ENCODE measurements at regions of chr10 and their contacts with region 1.

Region 1: DNA sequence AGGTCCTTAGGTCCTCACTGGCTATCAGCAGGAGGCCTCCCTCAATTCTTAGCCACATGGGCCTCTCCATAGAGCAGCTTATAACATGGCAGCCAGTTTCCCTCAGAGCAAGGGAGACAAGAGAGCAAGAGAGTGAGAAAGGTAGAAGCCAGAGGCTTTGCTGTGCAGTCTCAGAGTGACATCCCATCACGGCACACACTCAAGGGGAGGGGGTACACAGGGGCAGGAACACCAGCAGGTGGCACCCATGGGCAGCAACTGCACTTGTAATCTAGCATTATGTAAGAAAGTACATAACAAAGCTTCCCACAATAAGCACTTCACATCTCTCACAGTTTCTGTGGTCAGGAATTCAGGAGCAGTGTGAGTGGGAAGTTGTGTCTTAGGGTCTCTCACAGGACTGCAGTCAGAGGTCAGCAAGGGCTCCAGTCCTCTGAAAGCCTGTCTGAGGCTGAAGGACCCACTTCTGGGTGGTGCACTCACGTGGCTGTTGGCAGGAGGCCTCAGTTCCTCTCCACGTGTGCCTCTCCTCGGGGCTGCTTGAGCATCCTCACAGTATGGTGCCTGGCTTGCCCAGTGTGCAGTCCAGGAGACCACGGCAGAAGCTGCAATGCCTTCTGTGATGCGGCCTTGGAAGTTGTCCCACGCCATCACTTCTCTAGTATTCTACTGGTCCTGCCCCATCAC is 159.4 kb downstream of the OAT start:
- DNase-seq: no peak
- H3K4me3 ChIP-seq: no peak overlapping the region
- H3K27ac ChIP-seq: no peak overlapping the region
- H3K4me1 ChIP-seq: no peaks in the 10 kb centered on the region
- H3K27me3 ChIP-seq: no peaks in the 10 kb centered on the region
- CTCF ChIP-seq: no peak
- EP300 ChIP-seq: no peak
- POLR2A ChIP-seq: no peak

Region 2: DNA sequence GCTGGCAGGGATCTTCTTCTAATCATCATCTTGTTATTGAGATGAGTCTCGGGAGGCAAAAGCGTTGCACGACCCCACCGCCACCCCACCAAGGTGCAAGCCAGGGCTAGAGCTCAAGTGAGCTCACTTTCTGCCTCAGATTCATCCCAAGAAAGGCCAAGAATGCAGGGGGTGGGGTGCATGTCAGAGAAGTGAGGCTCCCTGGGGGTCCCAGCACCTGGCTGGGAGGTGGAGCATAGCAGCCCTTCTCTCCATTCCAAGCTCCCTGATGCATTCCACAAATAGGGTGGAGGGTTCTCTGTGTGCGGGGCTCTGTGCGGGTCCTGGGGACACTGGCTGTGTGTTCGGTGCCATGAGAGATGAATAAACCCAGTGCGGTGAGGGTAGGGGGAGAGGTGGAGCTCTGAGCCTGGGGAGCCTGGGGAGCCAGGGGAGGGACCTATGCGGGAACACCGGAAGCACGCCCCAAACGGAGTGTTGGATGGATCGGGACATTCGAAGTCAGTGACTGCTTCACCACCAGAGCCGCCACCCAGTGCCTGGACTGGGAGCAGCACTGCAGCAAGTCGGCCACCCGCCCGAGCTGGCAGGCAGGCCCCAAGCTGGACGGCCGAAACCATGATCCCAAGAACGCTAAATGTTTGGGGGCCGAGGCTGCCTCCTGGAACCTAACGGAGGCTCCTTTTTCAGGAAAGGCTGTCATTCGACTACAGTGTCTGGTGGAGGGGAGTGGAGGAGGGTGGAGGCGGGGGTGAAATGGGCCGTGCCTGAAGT is 1141.5 kb before region 1 on chr10:
- in situ Hi-C with region 1: no loop called
- intact Hi-C with region 1: loop called (anchors 5 kb)
- DNase-seq: no peak
- H3K4me3 ChIP-seq: no peak overlapping the region
- H3K27ac ChIP-seq: no peak overlapping the region
- H3K4me1 ChIP-seq: no peaks in the 10 kb centered on the region
- H3K27me3 ChIP-seq: peaks cover 44% of the 10 kb centered on the region
- CTCF ChIP-seq: no peak
- EP300 ChIP-seq: no peak
- POLR2A ChIP-seq: no peak

Region 3: DNA sequence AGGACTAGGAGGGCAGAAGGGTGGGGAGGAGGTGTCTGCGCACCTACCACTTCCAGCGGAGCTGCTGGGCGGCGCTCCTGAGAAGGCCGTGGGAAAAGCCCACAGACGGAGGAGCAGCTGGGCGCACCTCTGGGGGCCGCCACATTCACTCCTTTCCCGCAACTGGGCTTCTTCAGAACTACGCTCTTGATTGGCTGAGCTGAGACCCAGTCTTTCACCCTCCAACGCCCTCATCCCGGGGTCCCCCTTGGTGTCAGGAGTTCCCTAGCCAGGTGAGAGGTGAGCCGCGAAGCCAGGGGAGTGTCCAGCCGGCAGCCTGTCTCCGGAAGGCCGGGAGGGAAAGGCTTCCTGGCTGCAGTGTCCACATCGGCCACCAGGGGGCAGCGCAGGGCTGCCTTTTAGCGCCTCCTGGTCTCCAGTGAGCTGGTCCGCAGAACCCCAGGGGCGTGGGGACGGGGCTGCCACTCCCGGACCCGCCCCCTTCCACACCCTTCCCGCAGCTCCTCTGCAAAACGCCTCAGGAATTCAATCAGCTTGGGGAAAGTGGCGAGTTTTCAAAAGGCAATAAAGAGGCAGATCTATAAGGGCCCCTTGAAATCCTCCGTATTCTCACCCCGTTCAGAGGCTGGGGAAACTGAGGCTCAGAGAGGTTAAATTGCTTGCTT is 264.7 kb before region 1 on chr10:
- in situ Hi-C with region 1: loop called in 2 of 4 experiments (anchors 25 kb)
- intact Hi-C with region 1: loop called (anchors 10 kb)
- DNase-seq: peak; percentile 90
- H3K4me3 ChIP-seq: peak overlapping the region in 2 of 4 donors; percentile 3 to 5
- H3K27ac ChIP-seq: peak overlapping the region in 2 of 4 donors; percentile 41 to 64
- H3K4me1 ChIP-seq: peaks cover 15 to 27% (median 18%) of the 10 kb centered on the region in 4 donors
- H3K27me3 ChIP-seq: peaks cover 55% of the 10 kb centered on the region
- CTCF ChIP-seq: peak; percentile 99
- EP300 ChIP-seq: no peak
- POLR2A ChIP-seq: no peak

Region 4: GRCh38 chr10:124539935-124540641 is 280.8 kb after region 1 on chr10:
- in situ Hi-C with region 1: no loop called
- intact Hi-C with region 1: no loop called
- DNase-seq: peak; percentile 67
- H3K4me3 ChIP-seq: no peak overlapping the region
- H3K27ac ChIP-seq: no peak overlapping the region
- H3K4me1 ChIP-seq: peaks cover 0 to 7% (median 3%) of the 10 kb centered on the region in 4 donors
- H3K27me3 ChIP-seq: no peaks in the 10 kb centered on the region
- CTCF ChIP-seq: peak; percentile 58 to 75 (median 70)
- EP300 ChIP-seq: no peak
- POLR2A ChIP-seq: no peak